CD8-positive, alpha-beta memory T cell (primary cell): ENCODE measurements at regions of chr14 and their contacts with region 1.

Region 1: GRCh38 chr14:70873627-70874026 is 33.6 kb upstream of the PCNX1 start:
- DNase-seq: peak in 1 of 5 donors; percentile 28
- H3K4me3 ChIP-seq: no peak overlapping the region
- H3K4me3 Mint-ChIP-seq: peak overlapping the region in 4 of 7 donors; percentile 15 to 69 (median 42)
- H3K27ac ChIP-seq: no peak overlapping the region
- H3K27ac Mint-ChIP-seq: peak overlapping the region in 7 of 8 donors; percentile 61 to 87 (median 80)
- H3K4me1 ChIP-seq: peaks cover 13% of the 10 kb centered on the region
- H3K4me1 Mint-ChIP-seq: peaks cover 18 to 25% (median 24%) of the 10 kb centered on the region in 3 donors
- H3K27me3 ChIP-seq: no peaks in the 10 kb centered on the region
- H3K27me3 Mint-ChIP-seq: no peaks in the 10 kb centered on the region

Region 2: GRCh38 chr14:70887207-70887681 is 13.6 kb after region 1 on chr14:
- CTCF ChIA-PET with region 1: interaction called, 19 read pairs
- POLR2A ChIA-PET with region 1: interaction called, 5 read pairs
- DNase-seq: no peak
- H3K4me3 ChIP-seq: peak overlapping the region; percentile 40
- H3K4me3 Mint-ChIP-seq: peak overlapping the region; percentile 19 to 84 (median 71)
- H3K27ac ChIP-seq: no peak overlapping the region
- H3K27ac Mint-ChIP-seq: peak overlapping the region; percentile 70 to 95 (median 88)
- H3K4me1 ChIP-seq: peaks cover 68% of the 10 kb centered on the region
- H3K4me1 Mint-ChIP-seq: peaks cover 70 to 93% (median 87%) of the 10 kb centered on the region in 3 donors
- H3K27me3 ChIP-seq: no peaks in the 10 kb centered on the region
- H3K27me3 Mint-ChIP-seq: peaks cover 0 to 1% of the 10 kb centered on the region in 2 donors

Region 3: GRCh38 chr14:70926235-70926830 is 52.7 kb after region 1 on chr14:
- CTCF ChIA-PET with region 1: no interaction called
- POLR2A ChIA-PET with region 1: no interaction called
- DNase-seq: peak in 2 of 5 donors; percentile 24 to 37
- H3K4me3 ChIP-seq: no peak overlapping the region
- H3K4me3 Mint-ChIP-seq: peak overlapping the region in 6 of 7 donors; percentile 7 to 64 (median 36)
- H3K27ac ChIP-seq: no peak overlapping the region
- H3K27ac Mint-ChIP-seq: peak overlapping the region; percentile 6 to 72 (median 54)
- H3K4me1 ChIP-seq: peaks cover 50% of the 10 kb centered on the region
- H3K4me1 Mint-ChIP-seq: peaks cover 78 to 97% (median 97%) of the 10 kb centered on the region in 3 donors
- H3K27me3 ChIP-seq: no peaks in the 10 kb centered on the region
- H3K27me3 Mint-ChIP-seq: no peaks in the 10 kb centered on the region